Heart left ventricle (tissue), 16 donors: ENCODE measurements at regions of chrX and their contacts with region 1.

Region 1: GRCh38 chrX:155563099-155563498 is 49.7 kb downstream of the TMLHE start:
- DNase-seq: no peak
- ATAC-seq: no peak
- H3K4me3 ChIP-seq: no peak overlapping the region
- H3K27ac ChIP-seq: no peak overlapping the region
- H3K4me1 ChIP-seq: no peaks in the 10 kb centered on the region
- H3K27me3 ChIP-seq: no peaks in the 10 kb centered on the region
- CTCF ChIP-seq: no peak
- POLR2A ChIP-seq: no peak

Region 2: DNA sequence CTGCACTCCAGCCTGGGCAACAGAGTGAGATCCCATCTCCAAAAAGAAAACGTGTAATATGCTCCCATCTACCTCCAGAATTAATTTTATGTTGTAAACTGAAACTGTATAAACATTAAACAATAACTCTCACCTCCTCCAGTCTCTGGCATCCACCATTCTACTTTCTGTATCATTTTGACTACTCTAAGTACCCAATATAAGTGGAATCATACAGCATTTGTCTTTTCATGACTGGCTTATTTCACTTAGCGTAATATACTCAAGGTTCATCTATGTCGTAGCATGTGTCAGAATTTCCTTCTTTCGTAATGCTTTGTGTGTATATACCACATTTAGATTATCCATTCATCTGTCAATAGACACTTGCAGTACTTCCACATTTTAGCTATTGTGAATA is 561.2 kb before region 1 on chrX:
- intact Hi-C with region 1: no loop called
- DNase-seq: no peak
- ATAC-seq: no peak
- H3K4me3 ChIP-seq: no peak overlapping the region
- H3K27ac ChIP-seq: no peak overlapping the region
- H3K4me1 ChIP-seq: peaks cover 0 to 11% (median 4%) of the 10 kb centered on the region in 12 donors
- H3K27me3 ChIP-seq: no peaks in the 10 kb centered on the region
- CTCF ChIP-seq: no peak
- POLR2A ChIP-seq: no peak

Region 3: DNA sequence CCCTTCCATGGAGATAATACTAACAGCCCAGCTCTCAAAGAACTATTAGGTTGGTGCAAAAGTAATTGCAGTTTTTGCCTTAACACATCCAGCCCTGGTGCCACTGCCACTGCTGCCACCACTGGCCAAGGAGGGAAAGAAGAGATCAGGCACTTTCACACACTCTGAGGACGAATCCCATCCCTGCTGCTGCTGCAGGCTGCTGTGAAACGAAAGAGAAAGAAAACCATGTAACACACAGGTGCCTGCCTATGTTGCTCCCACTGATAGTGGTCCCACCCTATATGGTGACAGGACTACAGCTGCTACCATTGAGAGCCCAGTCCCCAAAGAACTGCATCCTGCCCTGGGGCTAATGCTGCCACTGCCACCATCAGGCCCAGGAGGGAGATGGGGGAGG is 14.6 kb after region 1 on chrX:
- intact Hi-C with region 1: loop called in 2 of 10 experiments (anchors 2 kb)
- DNase-seq: no peak
- ATAC-seq: no peak
- H3K4me3 ChIP-seq: no peak overlapping the region
- H3K27ac ChIP-seq: no peak overlapping the region
- H3K4me1 ChIP-seq: no peaks in the 10 kb centered on the region
- H3K27me3 ChIP-seq: no peaks in the 10 kb centered on the region
- CTCF ChIP-seq: no peak
- POLR2A ChIP-seq: no peak